Vagina (tissue), 2 donors: ENCODE measurements at regions of chr5 and their contacts with region 1.

Region 1: DNA sequence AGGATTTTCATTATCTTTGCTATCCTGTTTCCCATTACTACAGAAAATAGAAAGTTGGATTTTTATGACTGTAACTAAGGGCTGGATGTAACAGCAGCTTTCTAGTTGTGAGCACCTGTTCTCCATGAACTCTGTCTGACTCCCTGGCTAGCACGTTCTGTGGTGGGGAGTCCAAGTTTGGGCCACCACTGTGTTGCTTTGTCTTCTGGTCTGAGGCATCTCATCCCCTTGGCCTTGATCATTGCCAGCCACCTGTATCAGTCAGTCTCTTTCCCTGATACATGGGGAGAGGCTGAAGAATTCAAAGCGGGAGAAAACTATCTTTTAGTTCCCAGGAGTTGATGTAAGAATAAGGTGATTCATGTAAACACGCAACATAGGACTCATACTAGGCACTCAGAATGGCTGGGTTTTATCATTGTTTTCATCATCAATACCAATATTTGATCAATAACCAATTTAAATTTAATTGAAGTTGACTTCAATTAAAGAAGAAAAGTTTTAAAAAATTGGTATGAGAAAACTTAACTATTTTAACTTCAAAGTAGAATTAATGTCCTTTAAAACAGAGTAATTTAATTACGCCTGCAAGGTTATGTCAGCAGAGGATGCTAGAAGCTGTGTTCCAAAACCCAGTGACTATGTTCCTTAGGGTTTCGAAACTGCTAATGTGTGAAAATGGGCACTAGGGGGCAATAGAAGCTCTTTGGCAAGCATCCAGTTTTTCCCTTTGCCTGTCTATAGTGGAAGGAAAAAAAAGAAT is 33.6 kb downstream of the WDR70 start:
- DNase-seq: no peak
- H3K4me3 ChIP-seq: no peak overlapping the region
- H3K27ac ChIP-seq: no peak overlapping the region
- H3K4me1 ChIP-seq: no peaks in the 10 kb centered on the region
- H3K27me3 ChIP-seq: no peaks in the 10 kb centered on the region
- CTCF ChIP-seq: peak; percentile 48 to 82 (median 64)
- POLR2A ChIP-seq: no peak

Region 2: GRCh38 chr5:37436146-37436934 is 23.6 kb after region 1 on chr5:
- intact Hi-C with region 1: no loop called
- DNase-seq: no peak
- H3K4me3 ChIP-seq: no peak overlapping the region
- H3K27ac ChIP-seq: no peak overlapping the region
- H3K4me1 ChIP-seq: no peaks in the 10 kb centered on the region
- H3K27me3 ChIP-seq: no peaks in the 10 kb centered on the region
- CTCF ChIP-seq: no peak
- POLR2A ChIP-seq: no peak

Region 3: GRCh38 chr5:38193015-38193581 is 780.4 kb after region 1 on chr5:
- intact Hi-C with region 1: loop called (anchors 10 kb)
- DNase-seq: no peak
- H3K4me3 ChIP-seq: no peak overlapping the region
- H3K27ac ChIP-seq: no peak overlapping the region
- H3K4me1 ChIP-seq: no peaks in the 10 kb centered on the region
- H3K27me3 ChIP-seq: no peaks in the 10 kb centered on the region
- CTCF ChIP-seq: peak; percentile 79 to 86 (median 83)
- POLR2A ChIP-seq: no peak